Posterior cingulate gyrus (tissue), 11 donors: ENCODE measurements at regions of chr6 and their contacts with region 1.

Region 1: DNA sequence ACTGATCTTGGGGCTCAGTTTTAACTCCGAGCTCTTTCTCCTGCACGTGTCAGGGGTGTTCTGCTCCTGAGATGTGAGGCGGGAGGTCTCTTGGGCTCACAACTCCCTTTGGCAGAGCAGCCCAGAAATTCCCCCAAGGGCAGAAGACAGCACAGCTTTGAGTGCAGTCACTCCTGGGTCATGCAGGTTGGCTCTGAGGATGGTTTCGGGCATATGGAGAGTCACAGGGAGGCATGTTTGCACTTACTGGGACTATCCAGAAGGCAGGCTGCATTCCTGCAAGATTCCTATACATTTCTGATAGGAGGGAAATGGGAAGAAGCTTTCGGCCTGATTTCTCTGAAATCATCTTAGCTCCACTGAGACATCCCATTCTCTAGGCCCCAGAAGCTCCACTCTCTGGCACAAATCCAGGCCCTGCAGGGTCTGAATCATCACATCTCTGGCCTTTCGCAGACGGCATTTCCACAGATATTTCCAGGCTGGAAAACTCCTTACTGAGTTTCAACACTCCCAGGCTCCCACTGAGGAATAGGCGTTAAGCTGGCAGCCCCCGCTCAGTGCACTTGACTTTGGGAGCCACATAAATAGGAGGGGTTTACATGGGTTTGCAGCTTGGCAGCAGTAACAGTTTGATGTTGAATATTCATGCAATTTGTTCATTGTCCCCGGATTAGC is 39.7 kb downstream of the AGPAT4 start:
- DNase-seq: peak in 9 of 10 donors; percentile 43 to 93 (median 71)

Region 2: DNA sequence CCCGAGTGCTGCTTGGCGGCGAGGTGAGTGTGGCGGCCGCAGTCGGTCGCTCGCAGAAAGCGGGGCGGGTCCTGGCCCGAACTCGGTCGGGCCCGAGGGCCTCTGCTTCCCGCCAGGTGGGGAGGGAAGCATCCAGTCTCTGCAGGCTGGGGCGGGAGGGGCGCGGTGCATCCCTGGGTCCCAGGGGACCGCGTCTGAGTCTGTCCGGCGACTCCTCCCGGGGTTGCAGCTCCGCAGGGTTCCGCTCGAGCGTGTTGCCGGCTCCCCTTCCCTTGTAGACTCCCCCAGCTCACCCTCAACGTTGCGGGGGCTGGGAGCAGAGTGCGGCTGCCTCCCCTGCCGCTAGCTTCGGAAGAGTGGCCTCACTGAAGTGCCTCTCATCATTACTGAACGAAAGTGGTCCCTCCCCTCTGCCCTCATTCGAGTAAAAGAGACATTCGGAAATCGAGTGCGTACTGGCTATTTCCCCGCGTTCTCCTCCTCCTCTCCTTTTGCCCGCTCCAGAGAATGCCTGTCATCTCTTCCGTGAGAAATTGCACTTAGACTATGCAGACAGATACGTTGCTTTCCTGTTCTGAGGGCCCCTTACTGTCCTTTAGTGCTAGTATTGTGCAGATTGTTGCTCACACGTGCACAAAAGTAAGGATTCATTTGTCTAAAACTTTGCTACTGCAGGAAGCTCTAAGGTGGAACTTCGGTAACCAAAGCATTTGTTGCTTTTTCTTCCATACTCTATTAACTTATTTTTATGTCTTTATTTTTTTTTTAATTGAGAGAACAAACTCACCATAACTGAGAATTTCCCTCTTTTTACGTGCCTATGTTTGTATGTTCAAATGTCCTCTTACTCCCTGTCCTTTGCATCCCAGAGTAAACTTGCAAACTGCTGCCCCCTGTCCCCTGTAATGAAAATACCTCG is 241.8 kb before region 1 on chr6:
- intact Hi-C with region 1: loop called (anchors 10 kb)
- DNase-seq: peak; percentile 38 to 92 (median 50)

Region 3: GRCh38 chr6:161308075-161308655 is 74.0 kb after region 1 on chr6:
- intact Hi-C with region 1: no loop called
- DNase-seq: peak in 1 of 10 donors; percentile 62